ENCODE measurements at regions of chr3 and their contacts with region 1.

Region 1: GRCh38 chr3:99842826-99843589 is 25.3 kb downstream of the CMSS1 start:
- DNase-seq: no peak
- H3K4me3 ChIP-seq: peak overlapping the region in 1 of 2 donors; percentile 15
- H3K27ac ChIP-seq: peak overlapping the region; percentile 72
- H3K4me1 ChIP-seq: peaks cover 0 to 53% (median 40%) of the 10 kb centered on the region in 4 donors
- H3K27me3 ChIP-seq: no peaks in the 10 kb centered on the region
- CTCF ChIP-seq: peak; percentile 70 to 82

Region 2: GRCh38 chr3:99753268-99753975 is 89.6 kb before region 1 on chr3:
- intact Hi-C with region 1: no loop called
- DNase-seq: no peak
- H3K4me3 ChIP-seq: no peak overlapping the region
- H3K27ac ChIP-seq: peak overlapping the region in 1 of 2 donors; percentile 72
- H3K4me1 ChIP-seq: peaks cover 0 to 86% (median 43%) of the 10 kb centered on the region in 4 donors
- H3K27me3 ChIP-seq: no peaks in the 10 kb centered on the region
- CTCF ChIP-seq: peak; percentile 73 to 77

Region 3: GRCh38 chr3:100057716-100058575 is 214.9 kb after region 1 on chr3:
- intact Hi-C with region 1: loop called (anchors 10 kb)
- DNase-seq: no peak
- H3K4me3 ChIP-seq: no peak overlapping the region
- H3K27ac ChIP-seq: peak overlapping the region; percentile 14 to 28
- H3K4me1 ChIP-seq: peaks cover 0 to 47% (median 15%) of the 10 kb centered on the region in 4 donors
- H3K27me3 ChIP-seq: no peaks in the 10 kb centered on the region
- CTCF ChIP-seq: peak in 1 of 2 experiments; percentile 9

Region 4: GRCh38 chr3:100159331-100160153 is 316.5 kb after region 1 on chr3:
- intact Hi-C with region 1: loop called (anchors 10 kb)
- DNase-seq: no peak
- H3K4me3 ChIP-seq: no peak overlapping the region
- H3K27ac ChIP-seq: peak overlapping the region; percentile 39 to 76
- H3K4me1 ChIP-seq: peaks cover 0 to 70% (median 50%) of the 10 kb centered on the region in 4 donors
- H3K27me3 ChIP-seq: no peaks in the 10 kb centered on the region
- CTCF ChIP-seq: no peak

Region 5: DNA sequence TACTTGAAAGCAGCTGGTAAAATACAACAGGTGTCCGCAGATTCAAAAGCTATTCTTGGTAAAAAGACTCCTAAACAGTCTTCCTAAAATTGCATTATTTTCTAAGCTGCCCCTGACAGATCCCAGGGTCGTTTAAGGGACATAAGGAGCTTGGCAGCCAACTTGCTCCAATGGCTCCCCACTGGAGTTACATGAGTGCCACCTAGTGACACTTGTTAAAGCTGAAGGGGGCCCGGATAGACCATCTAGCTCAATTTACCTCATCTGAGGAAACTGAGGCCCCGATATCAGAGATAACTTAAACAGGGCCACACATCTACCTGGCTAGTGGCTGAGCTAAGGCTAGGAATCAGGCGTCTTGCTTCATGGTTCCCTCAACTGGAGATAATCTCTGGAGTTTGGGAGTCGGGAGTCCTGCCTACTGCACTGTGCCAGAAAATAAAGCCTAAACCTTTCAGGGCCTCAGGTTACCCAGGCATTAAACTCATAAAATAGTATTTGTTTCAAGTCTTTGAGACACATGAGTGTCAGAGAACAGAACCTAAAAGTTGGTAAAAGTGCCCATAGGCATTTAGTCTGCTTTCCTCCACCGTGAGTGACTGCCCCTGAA is 411.3 kb after region 1 on chr3:
- intact Hi-C with region 1: loop called (anchors 5 kb)
- DNase-seq: peak in 1 of 2 donors; percentile 45
- H3K4me3 ChIP-seq: no peak overlapping the region
- H3K27ac ChIP-seq: peak overlapping the region; percentile 50 to 60
- H3K4me1 ChIP-seq: peaks cover 0 to 16% (median 8%) of the 10 kb centered on the region in 4 donors
- H3K27me3 ChIP-seq: no peaks in the 10 kb centered on the region
- CTCF ChIP-seq: peak; percentile 79